Motor neuron (in vitro differentiated cells): ENCODE measurements at regions of chr2 and their contacts with region 1.

Region 1: DNA sequence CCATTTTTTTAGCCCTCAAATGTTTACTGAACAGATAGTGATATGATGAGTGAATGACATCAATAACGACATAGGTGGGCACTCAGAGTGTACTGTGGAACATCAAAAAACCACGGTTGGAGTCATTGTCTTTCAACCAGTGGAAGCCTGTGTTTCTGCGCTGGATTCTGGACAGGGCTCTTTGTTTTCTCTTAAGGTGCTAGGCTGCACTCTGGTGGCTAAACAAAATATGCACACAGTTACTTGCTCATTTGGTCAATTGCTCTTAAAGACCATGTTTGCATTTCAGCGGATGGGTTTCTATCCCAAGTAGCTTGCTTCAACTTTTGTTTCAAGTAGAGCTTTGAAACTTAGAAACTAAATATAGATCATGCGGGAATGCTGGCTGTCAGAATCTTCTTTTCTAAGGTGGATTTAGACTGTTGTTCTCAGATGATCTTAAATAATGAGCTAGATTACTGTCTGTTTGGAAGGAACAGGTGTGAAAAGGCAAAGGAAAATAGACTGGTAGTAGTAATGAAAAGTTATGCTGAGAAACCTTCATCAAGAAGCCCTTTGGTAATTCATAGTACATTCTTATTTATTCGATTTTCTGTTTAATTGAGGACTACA is 48.5 kb upstream of the LYPD6B start:
- ATAC-seq: peak; percentile 43 to 95 (median 74)
- H3K4me3 ChIP-seq: no peak overlapping the region
- H3K27ac ChIP-seq: no peak overlapping the region
- H3K4me1 ChIP-seq: peaks cover 2 to 4% of the 10 kb centered on the region in 2 donors

Region 2: DNA sequence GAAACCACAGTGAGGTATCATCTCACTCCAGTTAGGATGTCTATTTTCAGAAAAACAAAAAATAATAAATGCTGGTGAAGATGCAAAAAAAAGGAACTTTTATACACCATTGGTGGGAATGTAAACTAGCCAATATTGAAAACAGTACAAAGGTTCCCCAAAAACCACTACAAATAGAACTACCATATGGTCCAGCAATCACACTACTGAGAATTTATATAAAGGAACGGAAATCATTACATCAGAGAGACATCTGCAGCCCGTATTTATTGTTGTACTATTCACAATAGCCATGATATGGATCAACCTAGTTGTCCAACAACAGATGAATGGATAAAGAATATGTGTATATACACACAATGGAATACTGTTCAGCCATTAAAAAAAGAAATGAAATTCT is 1021.4 kb before region 1 on chr2:
- in situ Hi-C with region 1: loop called in 1 of 9 experiments (anchors 25 kb)
- ATAC-seq: no peak
- H3K4me3 ChIP-seq: no peak overlapping the region
- H3K27ac ChIP-seq: no peak overlapping the region
- H3K4me1 ChIP-seq: no peaks in the 10 kb centered on the region

Region 3: DNA sequence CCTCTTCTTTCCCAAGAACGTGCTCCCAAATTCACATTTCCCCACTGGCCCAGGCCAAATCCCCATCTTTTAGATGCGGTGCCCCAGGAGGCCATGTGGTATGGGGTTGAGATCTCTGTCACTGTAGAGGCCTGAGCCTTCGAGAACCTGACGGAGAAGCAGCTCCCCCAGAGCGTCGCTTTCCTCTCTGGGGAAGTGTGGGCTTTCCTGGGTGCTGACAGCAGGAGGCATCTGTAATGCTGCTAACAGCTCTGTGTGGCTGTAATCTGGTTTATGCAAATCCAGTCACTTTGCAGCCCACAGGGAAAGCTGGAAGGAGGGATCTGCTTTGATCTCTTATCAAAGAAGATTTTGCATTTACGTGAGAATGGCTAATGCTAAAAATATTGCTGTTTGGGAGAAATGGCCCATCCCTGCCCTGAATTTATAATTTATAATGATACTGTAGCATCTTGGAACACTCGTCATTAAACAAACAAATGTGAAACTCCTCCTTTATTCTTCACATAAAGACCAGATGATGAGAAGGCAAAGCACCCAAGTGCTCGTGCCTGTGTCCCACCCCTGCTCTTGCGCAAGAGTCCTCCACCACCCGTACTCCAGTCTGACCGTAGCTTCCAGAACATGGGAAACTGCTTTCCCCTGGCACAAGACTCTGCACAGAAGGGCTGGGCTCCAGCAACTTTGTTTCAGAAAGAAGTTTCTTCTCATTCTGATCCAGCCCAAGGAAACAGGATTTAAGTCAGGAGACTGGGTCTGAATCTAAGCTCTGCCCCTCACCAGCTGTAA is 455.4 kb before region 1 on chr2:
- in situ Hi-C with region 1: loop called in 1 of 9 experiments (anchors 25 kb)
- ATAC-seq: peak in 7 of 8 experiments; percentile 39 to 88 (median 75)
- H3K4me3 ChIP-seq: no peak overlapping the region
- H3K27ac ChIP-seq: no peak overlapping the region
- H3K4me1 ChIP-seq: peaks cover 6 to 17% of the 10 kb centered on the region in 2 donors

Region 4: DNA sequence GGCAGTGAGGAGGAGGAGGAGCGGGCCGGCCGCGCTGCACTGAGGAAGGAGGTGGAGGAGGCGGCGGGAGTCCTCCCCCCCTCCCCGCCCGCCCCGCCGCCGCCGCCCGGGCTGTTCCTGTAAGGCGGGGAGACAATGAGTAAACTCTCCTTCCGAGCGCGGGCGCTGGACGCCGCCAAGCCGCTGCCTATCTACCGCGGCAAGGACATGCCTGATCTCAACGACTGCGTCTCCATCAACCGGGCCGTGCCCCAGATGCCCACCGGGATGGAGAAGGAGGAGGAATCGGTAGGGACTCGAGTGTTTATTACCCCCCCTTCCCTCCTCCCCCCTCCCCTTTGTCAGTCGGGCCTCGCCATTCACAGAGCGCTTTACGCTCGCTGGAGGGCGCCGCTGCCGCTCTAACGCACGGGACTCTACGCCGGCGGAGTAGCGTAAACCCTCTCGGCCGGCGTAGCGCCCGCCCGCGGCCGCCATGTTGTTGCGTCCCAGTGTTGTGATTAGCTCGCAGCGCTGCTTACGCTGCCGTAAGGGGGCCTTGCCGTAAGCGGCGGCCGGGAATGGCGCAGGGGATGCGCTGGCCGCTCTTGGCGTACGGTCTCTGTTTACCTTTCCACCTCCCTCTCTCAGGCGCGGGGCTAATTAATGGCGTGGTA is 345.0 kb before region 1 on chr2:
- in situ Hi-C with region 1: loop called in 3 of 9 experiments (anchors 25 kb)
- ATAC-seq: peak; percentile 67 to 84 (median 72)
- H3K4me3 ChIP-seq: peak overlapping the region; percentile 74 to 97 (median 87)
- H3K27ac ChIP-seq: peak overlapping the region; percentile 99
- H3K4me1 ChIP-seq: peaks cover 4 to 8% of the 10 kb centered on the region in 2 donors